ENCODE measurements at regions of chr7 and their contacts with region 1.

Region 1: DNA sequence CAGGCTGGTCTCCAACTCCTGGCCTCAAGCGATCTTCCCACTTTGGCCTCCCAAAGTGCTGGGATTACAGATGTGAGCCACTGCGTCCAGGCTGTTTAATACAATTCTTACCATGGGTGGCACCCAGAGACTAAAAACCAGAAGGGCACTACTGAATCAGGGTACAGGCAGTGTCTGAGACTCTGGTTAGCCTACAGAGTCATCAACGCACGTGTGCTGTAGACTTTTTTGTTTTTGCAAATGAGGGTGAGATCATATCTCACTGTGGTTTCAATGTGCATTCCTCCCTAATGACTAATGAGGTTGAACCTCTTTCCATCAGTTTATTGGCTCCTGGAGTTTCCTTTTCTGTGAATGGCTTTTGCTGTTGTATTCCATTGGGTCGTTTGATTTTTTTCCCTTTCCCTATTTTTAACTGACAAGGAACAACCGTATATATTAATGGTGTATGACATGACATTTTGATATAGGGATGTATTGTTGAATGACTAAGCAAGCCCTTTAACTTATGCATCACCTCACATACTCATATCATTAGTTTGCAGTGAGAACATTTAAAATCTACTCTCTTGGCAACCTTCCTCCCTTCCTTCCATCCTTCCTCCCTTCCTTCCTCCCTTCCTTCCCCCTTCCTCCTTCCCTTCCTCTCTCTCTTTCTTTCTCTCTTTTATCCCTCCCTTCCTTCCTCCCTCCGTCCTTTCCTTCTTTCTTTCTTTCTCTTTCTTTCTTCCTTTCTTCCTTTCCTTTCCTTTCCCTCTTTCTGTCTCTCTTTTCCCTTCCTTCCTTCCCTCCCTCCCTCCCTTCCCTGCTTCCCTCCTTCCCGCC is 9.3 kb upstream of the METTL27 start:
- DNase-seq: no peak
- H3K4me3 ChIP-seq: no peak overlapping the region
- H3K27ac ChIP-seq: peak overlapping the region; percentile 19 to 81 (median 75)
- H3K4me1 ChIP-seq: peaks cover 0 to 39% (median 28%) of the 10 kb centered on the region in 4 donors
- H3K27me3 ChIP-seq: no peaks in the 10 kb centered on the region
- CTCF ChIP-seq: no peak
- EP300 ChIP-seq: no peak
- POLR2A ChIP-seq: no peak

Region 2: DNA sequence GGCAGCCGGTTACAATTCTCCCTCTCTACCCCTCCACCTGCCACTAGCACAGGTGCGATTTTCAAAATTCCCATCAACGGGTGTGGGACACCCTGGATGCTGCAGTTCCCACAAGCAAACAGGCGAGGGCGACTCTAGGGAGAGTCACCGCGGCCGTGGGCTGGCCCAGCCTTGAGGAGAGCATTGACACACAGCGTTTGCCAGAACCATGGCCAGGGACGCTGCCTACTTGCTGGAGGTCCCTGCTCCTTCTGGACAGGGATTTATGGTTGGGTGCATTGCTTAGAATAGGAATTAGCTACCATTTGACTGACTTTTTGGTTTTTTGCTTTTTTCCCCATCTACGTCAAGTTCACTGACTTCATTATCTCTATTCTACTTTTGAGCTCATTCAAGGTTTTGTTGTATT is 39.9 kb before region 1 on chr7:
- intact Hi-C with region 1: loop called (anchors 1 kb)
- DNase-seq: peak; percentile 82
- H3K4me3 ChIP-seq: no peak overlapping the region
- H3K27ac ChIP-seq: no peak overlapping the region
- H3K4me1 ChIP-seq: no peaks in the 10 kb centered on the region
- H3K27me3 ChIP-seq: peaks cover 0 to 15% (median 0%) of the 10 kb centered on the region in 3 donors
- CTCF ChIP-seq: peak in 3 of 4 experiments; percentile 79 to 83 (median 82)
- EP300 ChIP-seq: no peak
- POLR2A ChIP-seq: no peak

Measured in sigmoid colon (tissue), 7 donors.